ENCODE measurements at regions of chr16 and their contacts with region 1.

Region 1: DNA sequence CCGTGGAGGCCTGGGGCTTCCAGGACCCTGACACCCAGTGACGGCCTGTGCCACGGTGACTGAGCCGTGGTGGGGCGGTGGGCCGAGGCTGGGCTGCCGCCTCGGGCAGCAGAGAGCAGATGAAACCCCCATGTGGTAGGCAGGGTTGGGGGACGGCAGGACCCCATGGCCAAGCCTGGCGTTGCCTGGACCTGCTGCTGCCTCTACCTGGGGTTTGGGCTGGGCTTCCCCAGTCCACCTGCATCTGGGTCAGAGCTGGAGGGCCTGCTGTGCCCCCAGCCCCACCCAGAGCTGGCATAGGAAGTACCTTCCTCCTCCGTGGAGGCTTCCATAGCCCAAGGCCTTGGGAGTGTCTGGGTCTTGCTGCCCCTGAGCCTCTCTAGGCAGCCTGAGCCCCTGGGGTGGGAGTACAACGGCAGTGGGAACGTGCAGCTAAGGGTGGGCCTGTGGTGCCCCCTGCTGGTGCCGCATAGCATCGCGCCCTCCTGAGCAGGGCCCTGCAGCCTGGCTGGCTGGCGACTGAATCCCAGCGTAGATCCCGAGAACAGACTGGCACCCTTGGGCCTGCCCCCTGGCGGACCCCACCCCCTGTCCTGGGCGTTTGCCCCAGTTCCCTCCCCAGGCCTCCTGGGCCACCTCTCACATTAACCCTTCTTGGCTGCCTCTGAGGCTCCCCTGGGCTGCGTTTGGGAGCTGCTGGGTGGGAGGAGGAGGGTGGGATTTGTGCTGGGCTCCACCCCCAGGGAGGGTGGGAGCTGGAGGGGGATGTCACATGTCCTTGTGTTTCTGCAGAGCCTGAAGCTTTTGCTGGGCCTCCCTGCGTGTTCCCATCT is 12.6 kb upstream of the ATP6V0C start:
- DNase-seq: peak; percentile 49
- H3K4me3 ChIP-seq: no peak overlapping the region
- H3K27ac ChIP-seq: no peak overlapping the region
- H3K4me1 ChIP-seq: peaks cover 5% of the 10 kb centered on the region
- H3K27me3 ChIP-seq: no peaks in the 10 kb centered on the region
- CTCF ChIP-seq: peak; percentile 84 to 95

Region 2: DNA sequence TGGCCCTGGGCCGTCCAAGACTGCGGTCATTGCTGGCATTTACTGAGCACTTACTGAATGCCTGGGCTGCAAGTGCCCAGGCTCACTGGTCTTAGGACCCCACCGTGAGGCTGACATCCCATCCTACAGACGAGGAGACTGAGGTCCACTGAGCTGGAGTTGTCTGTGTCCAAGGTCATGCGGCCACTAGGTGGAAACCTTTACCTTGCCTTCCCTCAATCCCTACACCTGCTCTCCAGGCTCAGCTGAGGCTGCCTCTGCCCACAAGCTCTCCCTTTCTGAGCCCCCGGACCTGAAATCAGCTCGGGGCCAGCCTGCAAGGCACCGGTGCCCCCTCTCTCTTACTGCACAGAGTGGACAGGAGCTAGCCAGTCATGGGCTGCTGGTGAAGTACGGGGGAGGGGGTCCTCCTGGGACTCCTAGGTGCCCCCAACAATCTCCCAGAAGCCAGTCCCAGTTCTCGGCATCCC is 306.2 kb before region 1 on chr16:
- CTCF ChIA-PET with region 1: interaction called, 5 read pairs
- dilution Hi-C with region 1: no loop called
- in situ Hi-C with region 1: no loop called
- intact Hi-C with region 1: loop called (anchors 1 kb)
- DNase-seq: peak; percentile 54
- H3K4me3 ChIP-seq: peak overlapping the region in 1 of 3 experiments; percentile 44
- H3K27ac ChIP-seq: no peak overlapping the region
- H3K4me1 ChIP-seq: peaks cover 20% of the 10 kb centered on the region
- H3K27me3 ChIP-seq: no peaks in the 10 kb centered on the region
- CTCF ChIP-seq: peak; percentile 59 to 74

Region 3: GRCh38 chr16:2296661-2297505 is 204.3 kb before region 1 on chr16:
- CTCF ChIA-PET with region 1: no interaction called
- dilution Hi-C with region 1: no loop called
- in situ Hi-C with region 1: no loop called
- intact Hi-C with region 1: loop called (anchors 1 kb)
- DNase-seq: no peak
- H3K4me3 ChIP-seq: no peak overlapping the region
- H3K27ac ChIP-seq: no peak overlapping the region
- H3K4me1 ChIP-seq: no peaks in the 10 kb centered on the region
- H3K27me3 ChIP-seq: no peaks in the 10 kb centered on the region
- CTCF ChIP-seq: peak; percentile 29 to 58

Region 4: GRCh38 chr16:2537453-2538379 is 36.6 kb after region 1 on chr16 and contains the start of gene PDPK1:
- CTCF ChIA-PET with region 1: no interaction called
- dilution Hi-C with region 1: no loop called
- in situ Hi-C with region 1: no loop called
- intact Hi-C with region 1: no loop called
- DNase-seq: peak; percentile 95
- H3K4me3 ChIP-seq: peak within 1 kb of the TSS; percentile 64 to 74 (median 69)
- H3K27ac ChIP-seq: peak within 1 kb of the TSS; percentile 60
- H3K4me1 ChIP-seq: peaks cover 12% of the 10 kb centered on the region
- H3K27me3 ChIP-seq: no peaks in the 10 kb centered on the region
- CTCF ChIP-seq: no peak
- total RNA-seq, gene PDPK1: 28.2 to 33.7 TPM